ENCODE measurements at regions of chr3 and their contacts with region 1.

Region 1: DNA sequence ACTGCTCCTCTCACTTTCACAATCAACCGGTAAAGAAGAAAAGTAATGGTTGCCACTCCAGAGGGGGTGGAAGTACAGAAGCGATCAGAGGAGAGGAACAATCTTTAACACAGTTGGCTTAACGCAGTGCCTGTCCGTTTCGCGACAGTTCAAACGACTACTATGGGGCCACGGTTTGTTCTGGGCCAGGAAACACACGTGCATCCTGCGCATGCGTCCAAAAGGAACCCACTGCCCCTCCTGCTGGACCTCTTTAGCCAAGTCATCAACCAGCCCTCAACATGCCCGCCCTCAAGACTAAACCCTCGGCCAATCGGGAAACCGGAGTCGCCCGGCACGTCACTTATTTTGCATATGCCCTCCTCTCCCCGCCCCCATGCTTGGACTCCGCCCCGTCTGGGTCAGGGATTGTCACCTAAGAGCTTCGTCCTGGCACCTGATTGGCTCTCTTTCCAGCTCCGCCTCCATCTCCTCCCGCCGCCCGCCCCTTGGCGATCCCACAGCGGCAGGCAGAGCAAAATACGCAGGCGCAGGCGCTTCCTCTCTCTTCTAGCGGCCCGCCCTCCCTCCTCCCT is 345 bp upstream of the CDV3 start:
- DNase-seq: peak; percentile 99 to 100 (median 100)
- ATAC-seq: peak; percentile 78 to 86 (median 83)
- H3K4me3 ChIP-seq: peak overlapping the region; percentile 25 to 49
- H3K4me3 Mint-ChIP-seq: peak overlapping the region; percentile 83 to 93 (median 85)
- H3K27ac ChIP-seq: peak overlapping the region; percentile 90
- H3K27ac Mint-ChIP-seq: peak overlapping the region; percentile 99 to 100
- H3K4me1 ChIP-seq: peaks cover 30 to 35% of the 10 kb centered on the region in 2 experiments
- H3K4me1 Mint-ChIP-seq: peaks cover 50 to 59% (median 54%) of the 10 kb centered on the region in 3 donors
- H3K27me3 ChIP-seq: no peaks in the 10 kb centered on the region
- H3K27me3 Mint-ChIP-seq: no peaks in the 10 kb centered on the region

Region 2: DNA sequence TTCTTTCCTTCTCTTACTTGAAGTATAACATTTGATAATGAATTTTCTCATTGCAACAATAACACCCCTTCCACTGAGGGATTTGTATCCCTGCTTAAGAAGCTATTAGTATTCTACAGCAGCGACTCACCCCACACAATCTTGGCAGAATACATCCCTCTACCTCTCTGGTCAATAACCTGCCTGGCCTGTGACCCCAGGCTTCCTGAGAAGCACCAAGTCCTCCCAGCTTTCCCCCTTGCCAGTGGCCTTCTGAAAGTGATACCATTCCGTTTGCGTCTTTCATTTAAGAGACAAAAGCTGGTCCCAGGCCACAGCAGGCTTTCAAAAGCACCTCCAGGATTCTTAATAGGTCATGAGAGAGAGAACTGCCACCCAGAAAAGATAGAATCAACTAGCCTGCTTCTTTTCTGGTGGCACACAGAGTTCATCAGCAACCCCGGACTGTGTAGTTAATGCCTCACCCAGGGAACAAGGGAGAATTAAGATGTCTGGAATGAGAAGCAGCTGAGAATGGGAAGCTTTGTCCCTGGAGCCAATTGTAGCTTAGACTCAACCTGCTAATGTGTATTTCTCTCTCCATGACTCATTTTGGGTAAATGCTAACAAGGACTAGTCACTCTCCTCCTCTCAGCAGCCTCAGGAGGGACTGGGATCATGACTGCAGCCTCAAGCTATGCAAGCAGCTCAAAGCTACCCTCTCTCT is 1437.4 kb before region 1 on chr3:
- CTCF ChIA-PET with region 1: no interaction called
- POLR2A ChIA-PET with region 1: no interaction called
- DNase-seq: no peak
- ATAC-seq: no peak
- H3K4me3 ChIP-seq: no peak overlapping the region
- H3K4me3 Mint-ChIP-seq: no peak overlapping the region
- H3K27ac ChIP-seq: no peak overlapping the region
- H3K27ac Mint-ChIP-seq: no peak overlapping the region
- H3K4me1 ChIP-seq: no peaks in the 10 kb centered on the region
- H3K4me1 Mint-ChIP-seq: no peaks in the 10 kb centered on the region
- H3K27me3 ChIP-seq: peaks cover 0 to 4% of the 10 kb centered on the region in 2 experiments
- H3K27me3 Mint-ChIP-seq: peaks cover 9 to 12% of the 10 kb centered on the region in 2 donors

Region 3: GRCh38 chr3:133595341-133595740 is 22.2 kb after region 1 on chr3:
- CTCF ChIA-PET with region 1: interaction called in 1 of 2 experiments, 3 read pairs
- POLR2A ChIA-PET with region 1: interaction called, 4 to 14 read pairs
- DNase-seq: no peak
- ATAC-seq: peak in 3 of 4 experiments; percentile 15 to 60 (median 51)
- H3K4me3 ChIP-seq: no peak overlapping the region
- H3K4me3 Mint-ChIP-seq: no peak overlapping the region
- H3K27ac ChIP-seq: no peak overlapping the region
- H3K27ac Mint-ChIP-seq: no peak overlapping the region
- H3K4me1 ChIP-seq: no peaks in the 10 kb centered on the region
- H3K4me1 Mint-ChIP-seq: peaks cover 5 to 8% (median 7%) of the 10 kb centered on the region in 3 donors
- H3K27me3 ChIP-seq: no peaks in the 10 kb centered on the region
- H3K27me3 Mint-ChIP-seq: no peaks in the 10 kb centered on the region